ENCODE measurements at regions of chr2 and their contacts with region 1.

Region 1: DNA sequence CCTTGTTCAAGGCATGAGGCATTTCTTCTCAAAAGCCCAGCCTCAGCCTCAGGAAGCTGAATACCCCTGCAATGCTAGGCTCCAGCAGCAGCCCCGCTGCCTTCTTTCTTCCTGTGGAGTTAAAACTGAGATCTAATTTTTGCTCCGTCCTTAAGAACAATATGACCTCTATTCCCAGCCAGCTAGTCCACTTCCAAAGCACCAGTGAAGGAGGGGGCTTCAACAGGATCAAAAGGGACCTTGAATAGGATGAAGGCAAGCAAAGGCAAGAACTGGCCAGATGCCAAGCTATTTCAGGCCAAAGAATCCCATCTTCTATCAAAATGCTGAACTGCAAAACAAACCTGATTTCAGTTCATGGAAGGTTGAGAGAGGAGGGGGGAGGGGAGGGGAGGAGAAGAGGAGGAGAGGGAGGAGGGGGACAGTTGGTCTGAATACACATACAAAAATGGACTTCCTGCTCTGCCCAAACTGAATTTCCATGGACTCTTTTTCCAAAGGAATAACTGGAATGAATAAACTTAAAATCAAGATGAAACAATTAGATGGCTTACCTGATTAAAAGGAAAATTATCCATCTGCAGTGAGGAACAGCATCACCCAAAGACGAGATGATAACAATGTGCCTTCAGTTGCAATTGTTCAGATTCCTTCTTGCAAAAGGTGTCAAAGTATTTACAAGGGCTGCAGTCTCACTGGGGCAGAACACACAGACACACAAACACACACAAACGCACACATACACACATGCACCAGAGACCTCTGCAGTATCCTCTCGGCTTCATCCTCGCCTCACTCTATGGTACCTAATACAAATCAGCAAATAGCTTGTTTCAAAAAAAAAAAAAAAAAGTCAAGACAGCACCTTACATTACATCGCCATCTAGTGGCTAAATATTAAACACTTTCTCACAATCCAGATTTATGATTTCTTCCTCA is at the start of gene SCN1A:
- DNase-seq: peak; percentile 64
- H3K4me3 ChIP-seq: no peak within 1 kb of the TSS
- H3K27ac ChIP-seq: no peak within 1 kb of the TSS
- H3K4me1 ChIP-seq: no peaks in the 10 kb centered on the region
- H3K27me3 ChIP-seq: peaks cover 8 to 17% of the 10 kb centered on the region in 2 experiments
- CTCF ChIP-seq: peak; percentile 41 to 50
- POLR2A ChIP-seq: no peak
- total RNA-seq, gene SCN1A: not detected in 2 replicates

Region 2: GRCh38 chr2:164992818-164993217 is 1134.7 kb before region 1 on chr2:
- CTCF ChIA-PET with region 1: interaction called, 13 read pairs
- POLR2A ChIA-PET with region 1: no interaction called
- dilution Hi-C with region 1: no loop called
- intact Hi-C with region 1: no loop called
- DNase-seq: peak; percentile 71
- H3K4me3 ChIP-seq: no peak overlapping the region
- H3K27ac ChIP-seq: no peak overlapping the region
- H3K4me1 ChIP-seq: no peaks in the 10 kb centered on the region
- H3K27me3 ChIP-seq: no peaks in the 10 kb centered on the region
- CTCF ChIP-seq: peak; percentile 19 to 22
- POLR2A ChIP-seq: no peak

Region 3: DNA sequence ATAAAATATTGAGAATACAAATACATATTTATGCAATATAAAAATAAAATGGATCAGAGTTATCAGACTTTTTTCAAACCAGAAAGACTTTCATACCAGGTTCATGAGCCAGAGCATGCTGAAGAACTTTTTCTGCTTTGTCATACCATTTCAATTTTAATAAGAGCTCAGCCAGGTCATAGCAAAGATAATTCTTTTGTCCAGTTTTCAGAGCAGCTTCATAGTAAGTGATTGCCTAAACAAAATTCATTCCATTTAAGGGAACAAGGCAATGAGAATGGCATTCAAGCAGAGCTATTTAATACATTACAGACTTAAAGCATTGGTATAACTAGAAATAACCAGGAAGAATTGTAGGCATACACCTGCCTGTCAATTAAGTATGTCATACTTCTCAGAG is 216.3 kb before region 1 on chr2:
- CTCF ChIA-PET with region 1: interaction called, 10 read pairs
- POLR2A ChIA-PET with region 1: no interaction called
- dilution Hi-C with region 1: no loop called
- intact Hi-C with region 1: no loop called
- DNase-seq: no peak
- H3K4me3 ChIP-seq: no peak overlapping the region
- H3K27ac ChIP-seq: no peak overlapping the region
- H3K4me1 ChIP-seq: peaks cover 22% of the 10 kb centered on the region
- H3K27me3 ChIP-seq: no peaks in the 10 kb centered on the region
- CTCF ChIP-seq: no peak
- POLR2A ChIP-seq: no peak

Region 4: GRCh38 chr2:165969227-165969626 is 158.3 kb before region 1 on chr2:
- CTCF ChIA-PET with region 1: interaction called, 35 read pairs
- POLR2A ChIA-PET with region 1: no interaction called
- dilution Hi-C with region 1: no loop called
- intact Hi-C with region 1: loop called (anchors 1 kb)
- DNase-seq: peak; percentile 39
- H3K4me3 ChIP-seq: no peak overlapping the region
- H3K27ac ChIP-seq: no peak overlapping the region
- H3K4me1 ChIP-seq: no peaks in the 10 kb centered on the region
- H3K27me3 ChIP-seq: peaks cover 0 to 1% of the 10 kb centered on the region in 2 experiments
- CTCF ChIP-seq: peak in 1 of 2 donors; percentile 7
- POLR2A ChIP-seq: no peak

Region 5: DNA sequence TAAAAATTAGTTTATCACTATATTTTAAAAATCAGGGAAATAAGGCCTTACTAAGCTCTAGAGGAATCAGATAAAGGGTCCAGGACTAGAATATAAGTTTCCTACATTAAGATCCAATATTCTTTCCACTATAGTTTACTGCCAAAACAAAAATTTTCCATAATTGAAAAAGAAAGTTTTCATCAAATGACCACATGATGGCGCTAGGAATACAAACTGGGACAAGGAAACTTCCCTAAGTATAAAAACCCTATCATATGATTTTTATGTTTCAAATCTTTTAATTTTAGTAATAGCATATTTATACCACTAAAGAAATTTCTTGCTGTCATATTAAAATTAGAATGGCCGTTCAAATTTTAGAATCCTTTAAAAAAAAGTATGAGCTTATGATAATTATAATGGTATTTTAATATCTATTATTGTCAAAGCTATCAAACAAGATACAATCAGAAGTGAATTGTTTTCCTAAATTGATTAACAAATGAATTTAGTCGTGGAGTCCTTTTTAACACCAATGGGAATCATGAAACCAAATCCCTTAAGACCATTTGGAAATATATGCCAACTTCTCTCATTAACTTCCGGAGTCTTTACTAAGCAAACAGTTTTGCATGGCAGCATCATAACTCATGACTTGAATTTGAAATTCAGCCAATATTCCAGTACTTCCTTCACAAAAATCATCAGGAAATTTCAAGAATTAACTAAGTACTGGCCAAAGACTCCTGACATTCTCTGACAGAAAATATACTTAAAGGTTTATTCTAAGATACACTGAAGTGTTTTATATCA is 69.9 kb before region 1 on chr2:
- CTCF ChIA-PET with region 1: interaction called, 287 read pairs
- POLR2A ChIA-PET with region 1: no interaction called
- dilution Hi-C with region 1: no loop called
- intact Hi-C with region 1: loop called (anchors 1 kb)
- DNase-seq: peak; percentile 85
- H3K4me3 ChIP-seq: peak overlapping the region in 1 of 3 experiments; percentile 32
- H3K27ac ChIP-seq: peak overlapping the region; percentile 51
- H3K4me1 ChIP-seq: peaks cover 18% of the 10 kb centered on the region
- H3K27me3 ChIP-seq: no peaks in the 10 kb centered on the region
- CTCF ChIP-seq: peak; percentile 10 to 25
- POLR2A ChIP-seq: no peak

Region 6: GRCh38 chr2:166112193-166112605 is 15.3 kb before region 1 on chr2:
- CTCF ChIA-PET with region 1: interaction called, 25 read pairs
- POLR2A ChIA-PET with region 1: no interaction called
- dilution Hi-C with region 1: no loop called
- intact Hi-C with region 1: no loop called
- DNase-seq: no peak
- H3K4me3 ChIP-seq: no peak overlapping the region
- H3K27ac ChIP-seq: no peak overlapping the region
- H3K4me1 ChIP-seq: no peaks in the 10 kb centered on the region
- H3K27me3 ChIP-seq: no peaks in the 10 kb centered on the region
- CTCF ChIP-seq: no peak
- POLR2A ChIP-seq: no peak

Region 7: GRCh38 chr2:166282154-166282553 is 154.7 kb after region 1 on chr2:
- CTCF ChIA-PET with region 1: no interaction called
- POLR2A ChIA-PET with region 1: no interaction called
- dilution Hi-C with region 1: no loop called
- intact Hi-C with region 1: no loop called
- DNase-seq: no peak
- H3K4me3 ChIP-seq: no peak overlapping the region
- H3K27ac ChIP-seq: no peak overlapping the region
- H3K4me1 ChIP-seq: no peaks in the 10 kb centered on the region
- H3K27me3 ChIP-seq: no peaks in the 10 kb centered on the region
- CTCF ChIP-seq: no peak
- POLR2A ChIP-seq: no peak

Region 8: GRCh38 chr2:166417669-166418068 is 290.2 kb after region 1 on chr2:
- CTCF ChIA-PET with region 1: interaction called, 33 read pairs
- POLR2A ChIA-PET with region 1: no interaction called
- dilution Hi-C with region 1: no loop called
- intact Hi-C with region 1: loop called (anchors 5 kb)
- DNase-seq: peak; percentile 42
- H3K4me3 ChIP-seq: no peak overlapping the region
- H3K27ac ChIP-seq: no peak overlapping the region
- H3K4me1 ChIP-seq: peaks cover 5% of the 10 kb centered on the region
- H3K27me3 ChIP-seq: no peaks in the 10 kb centered on the region
- CTCF ChIP-seq: peak in 1 of 2 donors; percentile 9
- POLR2A ChIP-seq: no peak